Sciatic nerve (tissue), 2 donors: ENCODE measurements at regions of chr9 and their contacts with region 1.

Region 1: DNA sequence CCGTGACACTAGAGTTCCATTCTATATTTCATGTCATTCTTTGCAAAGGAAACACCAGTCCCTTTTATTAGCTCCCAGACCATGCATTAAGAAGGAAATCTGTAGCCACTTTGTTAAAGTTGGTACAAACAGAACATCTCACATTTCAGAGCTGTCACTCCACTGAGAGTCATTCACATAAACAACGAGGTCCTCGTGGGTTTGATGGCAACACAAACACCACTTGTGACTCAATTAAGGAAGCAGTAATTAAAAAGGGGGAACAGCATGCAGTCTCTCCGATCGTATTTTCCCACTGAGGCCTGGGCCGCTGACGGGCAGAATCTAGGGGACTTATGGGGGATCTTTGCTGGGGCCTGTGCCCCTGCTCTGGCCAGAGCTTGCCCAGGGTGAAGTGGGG is 94.2 kb upstream of the ZNF618 start:
- DNase-seq: no peak
- ATAC-seq: no peak

Region 2: GRCh38 chr9:113817171-113817570 is 35.3 kb after region 1 on chr9:
- intact Hi-C with region 1: loop called (anchors 2 kb)
- DNase-seq: no peak
- ATAC-seq: no peak

Region 3: DNA sequence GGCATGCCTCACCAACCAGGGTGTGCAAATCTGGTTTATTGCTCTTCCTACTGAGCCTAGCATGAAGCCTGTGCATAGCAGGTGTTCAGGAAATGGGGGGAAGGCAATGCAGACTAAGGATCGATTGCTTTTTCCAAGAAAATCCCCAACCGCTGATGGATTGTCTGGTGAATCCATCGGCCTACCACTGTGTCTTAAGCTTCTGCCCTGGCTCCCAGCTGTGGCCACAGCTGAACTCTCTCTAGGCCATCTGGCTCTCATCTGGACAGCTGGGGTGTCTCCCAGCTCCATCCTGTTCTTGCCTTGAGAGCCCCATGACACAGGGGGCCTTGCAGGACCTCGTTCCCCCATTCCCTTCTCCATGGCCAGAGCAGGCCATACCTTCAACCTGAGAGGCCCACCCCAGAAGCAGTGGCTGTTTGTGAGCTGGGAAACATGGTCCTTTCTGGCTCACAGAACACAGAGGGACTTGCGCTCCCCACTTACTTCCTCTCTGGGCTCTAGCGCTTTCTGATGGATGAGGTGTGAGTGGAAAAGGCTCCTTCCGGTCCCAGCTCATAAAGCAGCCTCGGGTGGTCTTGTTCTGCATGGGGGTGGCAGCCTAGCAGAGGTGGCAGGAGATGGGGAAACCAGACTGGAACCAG is 415.2 kb after region 1 on chr9:
- intact Hi-C with region 1: no loop called
- DNase-seq: no peak
- ATAC-seq: no peak